Activated CD8-positive, alpha-beta T cell treated with anti-CD3 and anti-CD28 coated beads for 36 hours (primary cell): ENCODE measurements at regions of chr5 and their contacts with region 1.

Region 1: GRCh38 chr5:149990518-149991376 is 9.7 kb downstream of the TIGD6 start:
- DNase-seq: peak; percentile 85
- ATAC-seq: peak; percentile 98
- H3K4me3 Mint-ChIP-seq: no peak overlapping the region
- H3K27ac Mint-ChIP-seq: no peak overlapping the region
- H3K4me1 Mint-ChIP-seq: no peaks in the 10 kb centered on the region
- H3K27me3 Mint-ChIP-seq: no peaks in the 10 kb centered on the region
- CTCF ChIP-seq: peak; percentile 86

Region 2: DNA sequence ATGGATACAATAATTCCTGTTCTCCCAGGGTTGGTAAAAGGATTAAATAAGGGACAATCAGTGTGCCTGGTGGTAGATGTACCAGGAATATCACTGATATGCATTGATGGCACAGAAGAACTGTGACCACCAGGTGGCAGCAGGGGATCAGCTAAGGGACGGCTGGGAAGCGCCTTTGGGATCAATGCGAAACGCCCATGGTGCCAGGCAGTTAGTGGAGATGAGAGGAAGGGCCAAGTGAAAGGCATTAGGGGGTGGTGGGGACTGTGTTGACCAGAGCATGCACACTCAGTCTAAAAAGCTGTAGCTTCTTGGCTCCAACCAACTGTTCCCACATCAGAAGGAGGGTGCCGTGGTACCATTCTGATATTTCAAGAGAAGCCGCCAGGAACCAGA is 353.9 kb before region 1 on chr5:
- CTCF ChIA-PET with region 1: interaction called, 27 read pairs
- POLR2A ChIA-PET with region 1: no interaction called
- intact Hi-C with region 1: loop called (anchors 5 kb)
- DNase-seq: peak; percentile 81
- ATAC-seq: peak; percentile 65
- H3K4me3 Mint-ChIP-seq: no peak overlapping the region
- H3K27ac Mint-ChIP-seq: no peak overlapping the region
- H3K4me1 Mint-ChIP-seq: peaks cover 19% of the 10 kb centered on the region
- H3K27me3 Mint-ChIP-seq: no peaks in the 10 kb centered on the region
- CTCF ChIP-seq: peak; percentile 98

Region 3: GRCh38 chr5:149828161-149828884 is 162.4 kb before region 1 on chr5:
- CTCF ChIA-PET with region 1: interaction called, 163 read pairs
- POLR2A ChIA-PET with region 1: no interaction called
- intact Hi-C with region 1: no loop called
- DNase-seq: peak; percentile 93
- ATAC-seq: peak; percentile 65
- H3K4me3 Mint-ChIP-seq: no peak overlapping the region
- H3K27ac Mint-ChIP-seq: peak overlapping the region; percentile 52
- H3K4me1 Mint-ChIP-seq: peaks cover 11% of the 10 kb centered on the region
- H3K27me3 Mint-ChIP-seq: no peaks in the 10 kb centered on the region
- CTCF ChIP-seq: peak; percentile 88

Region 4: GRCh38 chr5:149852641-149853330 is 138.0 kb before region 1 on chr5:
- CTCF ChIA-PET with region 1: interaction called, 16 read pairs
- POLR2A ChIA-PET with region 1: no interaction called
- intact Hi-C with region 1: no loop called
- DNase-seq: peak; percentile 67
- ATAC-seq: peak; percentile 58
- H3K4me3 Mint-ChIP-seq: no peak overlapping the region
- H3K27ac Mint-ChIP-seq: no peak overlapping the region
- H3K4me1 Mint-ChIP-seq: no peaks in the 10 kb centered on the region
- H3K27me3 Mint-ChIP-seq: no peaks in the 10 kb centered on the region
- CTCF ChIP-seq: peak; percentile 85

Region 5: DNA sequence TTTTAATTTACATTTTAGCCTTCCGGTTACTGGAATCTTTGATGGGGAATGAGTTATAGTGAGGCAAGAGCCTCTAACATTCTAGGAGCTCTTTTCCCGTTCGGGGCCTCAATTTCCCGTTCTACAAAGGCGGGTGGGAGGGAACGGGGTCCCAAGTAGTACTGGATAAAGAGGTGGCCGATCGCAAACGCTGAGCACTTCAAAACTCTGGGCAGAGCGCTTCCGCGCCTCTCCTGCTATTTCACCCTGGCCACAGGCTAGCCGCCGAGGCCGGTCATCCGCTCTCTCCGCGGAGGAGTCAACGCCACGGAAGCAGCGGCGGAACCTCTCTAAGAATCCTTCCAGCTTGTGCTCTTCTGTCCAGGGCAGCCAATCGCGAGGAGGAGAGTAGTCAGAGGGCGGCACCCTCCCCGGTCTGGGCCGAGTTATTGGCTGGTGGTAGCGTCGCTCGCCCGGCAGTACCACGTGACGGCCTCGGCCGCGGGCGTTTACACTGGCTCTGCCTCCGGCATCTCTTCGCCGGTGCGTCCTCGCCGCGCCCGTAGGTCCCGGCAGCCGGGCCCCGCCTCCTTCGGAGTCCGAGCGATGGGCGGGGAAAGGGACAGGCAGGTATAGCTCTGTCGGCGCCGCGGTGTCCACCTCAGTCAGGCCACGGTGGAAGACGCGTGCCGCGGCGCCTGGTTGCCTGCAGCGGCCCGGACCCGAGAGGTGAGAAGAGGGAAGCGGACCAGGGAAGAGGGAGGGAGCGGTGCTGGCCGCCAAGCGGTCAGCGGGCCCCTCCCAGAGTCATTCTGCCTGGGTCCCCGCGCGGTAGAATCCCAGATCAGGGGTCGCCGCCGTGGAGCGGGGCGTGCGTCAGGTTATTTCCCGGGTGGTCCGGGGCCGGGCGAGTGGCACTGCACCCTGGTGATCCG is 30.2 kb before region 1 on chr5 and contains the start of gene SLC26A2:
- CTCF ChIA-PET with region 1: interaction called, 44 read pairs
- POLR2A ChIA-PET with region 1: interaction called, 3 read pairs
- intact Hi-C with region 1: no loop called
- DNase-seq: peak; percentile 97
- ATAC-seq: peak; percentile 96
- H3K4me3 Mint-ChIP-seq: peak within 1 kb of the TSS; percentile 95
- H3K27ac Mint-ChIP-seq: peak within 1 kb of the TSS; percentile 99
- H3K4me1 Mint-ChIP-seq: peaks cover 35% of the 10 kb centered on the region
- H3K27me3 Mint-ChIP-seq: no peaks in the 10 kb centered on the region
- CTCF ChIP-seq: no peak
- total RNA-seq, gene SLC26A2: 5.0 to 5.3 TPM

Region 6: DNA sequence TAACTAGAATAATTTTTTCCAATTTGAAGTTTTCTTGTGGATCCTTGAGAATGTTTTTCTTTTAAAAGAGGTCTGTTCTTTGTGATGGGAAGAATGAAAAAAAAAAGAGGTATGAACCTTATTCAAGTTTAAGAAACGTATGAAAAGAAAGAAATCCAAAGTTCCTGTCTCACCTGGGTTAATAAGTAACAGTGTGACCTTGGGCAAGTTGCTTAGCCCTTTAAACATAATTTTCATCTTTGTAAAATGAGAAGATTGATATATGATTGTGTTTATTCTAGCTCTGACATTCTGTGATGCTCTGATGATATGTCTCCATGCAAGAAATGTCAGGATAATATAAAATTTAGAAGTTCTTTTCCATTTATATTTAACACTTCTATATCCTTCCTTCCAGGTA is 10.9 kb before region 1 on chr5:
- CTCF ChIA-PET with region 1: interaction called, 18 read pairs
- POLR2A ChIA-PET with region 1: no interaction called
- intact Hi-C with region 1: no loop called
- DNase-seq: no peak
- ATAC-seq: no peak
- H3K4me3 Mint-ChIP-seq: no peak overlapping the region
- H3K27ac Mint-ChIP-seq: no peak overlapping the region
- H3K4me1 Mint-ChIP-seq: peaks cover 4% of the 10 kb centered on the region
- H3K27me3 Mint-ChIP-seq: no peaks in the 10 kb centered on the region
- CTCF ChIP-seq: no peak